WTC11 (cell line): ENCODE measurements at regions of chr10 and their contacts with region 1.

Region 1: GRCh38 chr10:97072851-97073665 is 112.7 kb downstream of the SLIT1 start:
- DNase-seq: peak; percentile 91
- ATAC-seq: peak; percentile 76
- H3K4me3 Mint-ChIP-seq: no peak overlapping the region
- H3K27ac Mint-ChIP-seq: no peak overlapping the region
- H3K4me1 Mint-ChIP-seq: peaks cover 17% of the 10 kb centered on the region
- H3K27me3 Mint-ChIP-seq: no peaks in the 10 kb centered on the region
- CTCF ChIP-seq: peak; percentile 96

Region 2: GRCh38 chr10:97025613-97026242 is 47.3 kb before region 1 on chr10:
- CTCF ChIA-PET with region 1: interaction called, 23 read pairs
- POLR2A ChIA-PET with region 1: no interaction called
- DNase-seq: peak; percentile 69
- ATAC-seq: peak; percentile 92
- H3K4me3 Mint-ChIP-seq: no peak overlapping the region
- H3K27ac Mint-ChIP-seq: no peak overlapping the region
- H3K4me1 Mint-ChIP-seq: peaks cover 8% of the 10 kb centered on the region
- H3K27me3 Mint-ChIP-seq: no peaks in the 10 kb centered on the region
- CTCF ChIP-seq: peak; percentile 88

Region 3: GRCh38 chr10:97059006-97059871 is 13.8 kb before region 1 on chr10:
- CTCF ChIA-PET with region 1: interaction called, 59 read pairs
- POLR2A ChIA-PET with region 1: no interaction called
- DNase-seq: peak; percentile 66
- ATAC-seq: peak; percentile 89
- H3K4me3 Mint-ChIP-seq: no peak overlapping the region
- H3K27ac Mint-ChIP-seq: no peak overlapping the region
- H3K4me1 Mint-ChIP-seq: peaks cover 8% of the 10 kb centered on the region
- H3K27me3 Mint-ChIP-seq: no peaks in the 10 kb centered on the region
- CTCF ChIP-seq: no peak

Region 4: GRCh38 chr10:97107551-97107950 is 34.5 kb after region 1 on chr10:
- CTCF ChIA-PET with region 1: interaction called, 13 read pairs
- POLR2A ChIA-PET with region 1: no interaction called
- DNase-seq: no peak
- ATAC-seq: no peak
- H3K4me3 Mint-ChIP-seq: no peak overlapping the region
- H3K27ac Mint-ChIP-seq: no peak overlapping the region
- H3K4me1 Mint-ChIP-seq: peaks cover 17% of the 10 kb centered on the region
- H3K27me3 Mint-ChIP-seq: no peaks in the 10 kb centered on the region
- CTCF ChIP-seq: no peak

Region 5: DNA sequence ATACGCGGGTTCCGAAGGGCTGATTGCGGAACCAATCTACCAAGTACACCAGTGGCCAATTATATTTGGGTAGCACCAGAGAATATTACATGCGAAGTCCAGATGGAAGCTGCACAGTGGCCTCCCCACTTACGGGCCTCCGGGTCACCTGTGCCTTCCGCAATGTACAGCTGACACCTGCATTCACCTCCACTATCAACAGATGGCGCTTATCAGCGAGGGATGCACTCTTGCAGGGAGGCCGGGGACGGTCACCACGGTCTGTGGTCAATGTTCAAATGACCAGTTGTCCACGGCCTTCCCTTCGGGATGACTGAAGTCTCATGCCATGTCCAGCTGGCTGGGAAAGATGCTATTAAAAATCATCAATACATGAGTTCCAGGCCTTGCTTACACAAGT is 65.1 kb after region 1 on chr10:
- CTCF ChIA-PET with region 1: interaction called, 18 read pairs
- POLR2A ChIA-PET with region 1: no interaction called
- DNase-seq: peak; percentile 60
- ATAC-seq: peak; percentile 74
- H3K4me3 Mint-ChIP-seq: no peak overlapping the region
- H3K27ac Mint-ChIP-seq: no peak overlapping the region
- H3K4me1 Mint-ChIP-seq: peaks cover 22% of the 10 kb centered on the region
- H3K27me3 Mint-ChIP-seq: no peaks in the 10 kb centered on the region; the same call in 1 of the 2 replicates
- CTCF ChIP-seq: no peak; the same call in 1 of the 2 replicates

Region 6: DNA sequence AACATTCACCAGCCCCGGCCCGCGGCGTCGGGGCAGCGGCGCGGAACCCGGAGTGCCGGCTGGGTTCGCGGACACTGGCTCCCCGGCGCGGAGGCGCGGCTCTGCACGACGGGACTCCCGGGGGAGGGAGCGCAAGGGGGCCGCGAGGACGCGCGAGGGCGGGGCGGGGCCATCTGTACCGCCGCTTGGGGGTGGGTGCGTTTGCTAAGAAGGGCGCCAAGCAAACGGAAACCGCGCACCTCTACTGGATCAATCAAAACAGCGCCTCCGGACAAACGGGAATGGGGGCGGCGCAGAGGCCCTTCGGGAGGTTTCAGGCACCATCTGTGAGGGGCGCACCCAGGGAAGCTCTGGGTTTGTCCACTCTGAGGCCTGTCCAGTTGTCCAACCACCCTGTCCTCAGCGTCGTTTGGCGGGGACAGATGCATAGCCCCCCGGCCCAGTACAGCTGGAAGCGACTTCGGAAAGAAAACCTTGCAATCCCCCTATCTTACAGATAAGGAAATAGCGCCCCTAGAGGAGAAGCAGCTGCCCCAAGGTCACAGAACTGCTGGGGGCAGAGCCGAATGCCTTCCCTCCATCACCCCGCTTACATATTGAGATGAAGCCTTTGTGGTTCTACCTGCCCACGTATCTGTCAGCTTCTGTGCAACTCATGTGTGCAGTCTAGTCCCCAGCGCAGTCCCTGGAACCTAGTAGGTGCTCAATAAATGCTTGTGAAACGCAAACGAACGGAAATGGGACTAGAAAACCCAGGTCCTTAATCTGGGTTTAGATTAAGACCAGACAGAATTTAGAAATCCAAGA is 123.4 kb after region 1 on chr10:
- CTCF ChIA-PET with region 1: interaction called, 364 read pairs
- POLR2A ChIA-PET with region 1: no interaction called
- DNase-seq: peak; percentile 78
- ATAC-seq: peak; percentile 91
- H3K4me3 Mint-ChIP-seq: peak overlapping the region; percentile 77
- H3K27ac Mint-ChIP-seq: no peak overlapping the region
- H3K4me1 Mint-ChIP-seq: peaks cover 13% of the 10 kb centered on the region
- H3K27me3 Mint-ChIP-seq: peaks cover 15% of the 10 kb centered on the region
- CTCF ChIP-seq: peak; percentile 76

Region 7: GRCh38 chr10:97222326-97222961 is 149.4 kb after region 1 on chr10:
- CTCF ChIA-PET with region 1: interaction called, 11 read pairs
- POLR2A ChIA-PET with region 1: interaction called, 3 read pairs
- DNase-seq: peak; percentile 54
- ATAC-seq: peak; percentile 99
- H3K4me3 Mint-ChIP-seq: no peak overlapping the region
- H3K27ac Mint-ChIP-seq: no peak overlapping the region
- H3K4me1 Mint-ChIP-seq: peaks cover 9% of the 10 kb centered on the region
- H3K27me3 Mint-ChIP-seq: no peaks in the 10 kb centered on the region
- CTCF ChIP-seq: no peak

Region 8: GRCh38 chr10:97255512-97256293 is 182.6 kb after region 1 on chr10:
- CTCF ChIA-PET with region 1: no interaction called
- POLR2A ChIA-PET with region 1: no interaction called
- DNase-seq: no peak
- ATAC-seq: no peak; the same call in 1 of the 2 replicates
- H3K4me3 Mint-ChIP-seq: no peak overlapping the region
- H3K27ac Mint-ChIP-seq: no peak overlapping the region; the same call in 1 of the 2 replicates
- H3K4me1 Mint-ChIP-seq: no peaks in the 10 kb centered on the region; the same call in 1 of the 2 replicates
- H3K27me3 Mint-ChIP-seq: no peaks in the 10 kb centered on the region
- CTCF ChIP-seq: no peak